ENCODE measurements at regions of chr9 and their contacts with region 1.

Region 1: DNA sequence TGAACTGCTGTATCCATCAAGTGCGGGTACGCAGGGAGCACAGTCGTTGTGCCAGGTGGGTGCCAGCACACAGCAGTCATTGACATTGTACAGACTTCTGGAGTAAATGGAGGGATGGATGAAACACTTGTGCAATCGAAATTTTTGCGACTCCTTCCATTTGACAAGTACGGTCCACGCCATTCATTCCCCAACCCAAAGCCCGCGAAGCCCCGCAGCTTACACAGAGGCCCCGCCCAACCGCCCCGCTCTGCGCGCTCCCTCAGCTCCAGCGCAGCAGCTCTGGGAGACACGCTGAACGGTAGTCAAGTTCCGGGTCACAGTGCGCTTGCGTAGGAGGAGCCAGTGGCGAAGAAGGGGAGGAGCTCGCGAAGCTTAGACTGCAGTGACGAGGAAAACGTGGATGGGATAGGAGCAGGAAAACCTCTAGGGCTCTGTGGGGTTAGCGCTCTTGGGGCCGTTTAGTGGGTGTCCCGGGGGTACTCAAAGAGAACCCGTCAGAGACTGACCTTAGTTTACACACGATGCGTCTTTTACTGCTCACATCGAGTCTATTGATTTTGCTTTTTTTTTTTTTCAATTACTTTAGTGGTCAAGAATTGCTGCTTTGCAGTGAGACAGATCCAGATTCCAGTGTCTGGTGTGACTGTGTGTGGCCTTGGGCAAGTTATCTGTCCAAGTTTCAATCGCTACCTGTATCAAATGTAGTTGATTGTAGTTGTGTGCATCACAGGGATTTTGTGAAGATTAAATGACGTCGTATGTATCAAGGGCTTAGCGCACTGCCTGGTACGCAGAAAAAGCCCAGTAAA is 15.3 kb upstream of the MSANTD3 start:
- DNase-seq: peak; percentile 91 to 95
- H3K4me3 ChIP-seq: peak overlapping the region; percentile 48
- H3K4me3 Mint-ChIP-seq: peak overlapping the region; percentile 74
- H3K27ac Mint-ChIP-seq: peak overlapping the region; percentile 39
- H3K4me1 ChIP-seq: peaks cover 11% of the 10 kb centered on the region; the same call in 1 of the 2 replicates
- H3K4me1 Mint-ChIP-seq: no peaks in the 10 kb centered on the region
- H3K27me3 ChIP-seq: no peaks in the 10 kb centered on the region
- H3K27me3 Mint-ChIP-seq: no peaks in the 10 kb centered on the region
- CTCF ChIP-seq: no peak

Region 2: DNA sequence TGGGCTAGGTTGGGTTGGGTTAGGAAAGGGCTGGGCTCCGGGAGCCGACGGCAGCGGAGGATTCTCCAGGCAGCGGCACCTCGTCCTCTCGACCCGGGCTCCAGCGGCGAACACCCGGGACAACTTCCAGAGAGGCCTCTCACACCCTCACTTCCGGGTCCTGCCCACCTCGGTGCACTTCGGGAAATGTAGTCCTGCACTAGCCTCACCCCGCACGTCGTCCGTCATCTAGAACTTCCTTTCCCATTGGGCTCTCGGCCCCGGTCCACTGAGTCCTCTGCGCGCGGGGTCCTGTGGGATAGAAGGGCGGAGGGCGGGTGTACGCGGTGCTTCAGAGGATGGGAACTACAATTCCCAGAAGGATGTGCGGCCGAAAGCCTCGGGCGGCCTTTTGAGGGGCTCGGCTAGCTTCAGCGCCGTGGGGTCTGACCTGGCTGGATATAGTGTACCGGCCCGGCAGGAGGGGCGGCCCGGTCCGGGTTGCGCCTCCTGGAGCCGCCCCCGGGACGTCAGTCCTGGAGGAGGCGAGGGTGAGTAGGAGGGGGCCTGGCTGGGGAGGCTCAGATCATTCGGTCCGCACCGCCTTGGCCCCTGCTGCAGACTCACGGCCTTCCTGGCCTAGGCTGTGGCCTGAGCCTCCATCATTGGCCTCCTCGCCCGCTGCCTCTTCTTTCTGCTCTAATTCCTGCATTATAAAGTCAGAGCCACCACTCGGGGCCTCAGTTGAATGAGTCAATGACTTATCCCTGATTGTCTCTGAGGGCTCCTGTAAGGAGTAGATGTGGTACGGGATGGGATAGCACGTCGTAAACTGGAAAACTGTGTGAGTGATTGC is 312.6 kb before region 1 on chr9 and contains the starts of genes ERP44 and INVS:
- CTCF ChIA-PET with region 1: no interaction called
- POLR2A ChIA-PET with region 1: no interaction called
- intact Hi-C with region 1: no loop called
- DNase-seq: peak; percentile 98 to 99
- H3K4me3 ChIP-seq: peak within 1 kb of the TSS; percentile 99
- H3K4me3 Mint-ChIP-seq: peak within 1 kb of the TSS; percentile 96
- H3K27ac Mint-ChIP-seq: peak within 1 kb of the TSS; percentile 97
- H3K4me1 ChIP-seq: peaks cover 6% of the 10 kb centered on the region; the same call in 1 of the 2 replicates
- H3K4me1 Mint-ChIP-seq: peaks cover 7% of the 10 kb centered on the region
- H3K27me3 ChIP-seq: no peaks in the 10 kb centered on the region
- H3K27me3 Mint-ChIP-seq: no peaks in the 10 kb centered on the region
- CTCF ChIP-seq: no peak
- total RNA-seq, gene ERP44: 23.9 and 25.6 TPM in 2 replicates
- total RNA-seq, gene INVS: 15.6 and 17.3 TPM in 2 replicates

Region 3: DNA sequence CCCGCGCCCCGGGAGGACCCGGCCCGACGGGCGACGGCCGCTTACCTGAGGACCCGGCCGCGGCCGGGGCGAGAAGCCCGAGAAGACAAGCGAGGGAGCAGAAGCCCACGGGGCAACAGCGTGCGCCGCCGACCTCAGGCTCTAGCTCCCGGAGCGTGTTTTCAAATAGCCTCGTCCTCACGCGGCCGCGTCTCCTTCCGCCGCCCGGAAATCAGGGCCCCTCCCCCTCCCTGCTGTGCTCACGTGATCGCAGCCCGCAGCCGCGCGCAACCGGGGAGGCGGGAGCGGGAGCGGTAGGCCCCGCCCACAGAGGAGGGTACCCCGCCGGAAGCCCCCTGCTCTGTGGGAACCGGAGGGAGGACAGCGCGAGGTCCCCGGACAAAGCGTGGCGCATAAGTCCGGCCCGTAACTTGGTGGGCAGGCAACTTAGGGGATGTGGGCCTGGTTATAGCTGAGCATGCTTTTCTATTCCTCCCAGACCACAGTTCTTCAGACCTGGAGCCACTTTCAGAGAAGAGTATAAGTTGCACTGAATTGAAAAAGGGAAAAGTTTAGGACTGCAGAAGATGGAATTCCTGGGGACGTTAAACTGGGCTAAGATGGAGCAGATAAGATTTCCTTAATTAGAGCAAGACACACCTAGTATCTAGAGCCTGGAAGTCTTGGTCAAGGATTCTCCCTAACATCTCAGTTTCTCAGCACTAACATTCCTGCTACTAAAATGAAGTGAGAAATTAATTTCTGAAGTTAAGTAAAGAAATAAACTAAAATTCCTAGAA is 58.8 kb before region 1 on chr9 and contains the start of gene TEX10:
- CTCF ChIA-PET with region 1: interaction called, 5 read pairs
- POLR2A ChIA-PET with region 1: interaction called, 4 read pairs
- intact Hi-C with region 1: loop called (anchors 2 kb)
- DNase-seq: peak; percentile 90 to 91
- H3K4me3 ChIP-seq: peak within 1 kb of the TSS; percentile 99
- H3K4me3 Mint-ChIP-seq: peak within 1 kb of the TSS; percentile 99
- H3K27ac Mint-ChIP-seq: peak within 1 kb of the TSS; percentile 92
- H3K4me1 ChIP-seq: peaks cover 7% of the 10 kb centered on the region; the same call in 1 of the 2 replicates
- H3K4me1 Mint-ChIP-seq: peaks cover 26% of the 10 kb centered on the region
- H3K27me3 ChIP-seq: no peaks in the 10 kb centered on the region
- H3K27me3 Mint-ChIP-seq: no peaks in the 10 kb centered on the region
- CTCF ChIP-seq: no peak
- total RNA-seq, gene TEX10: 31.1 and 35.0 TPM in 2 replicates

Measured in Caco-2 (cell line).